CD14-positive monocyte (primary cell): ENCODE measurements at regions of chr20 and their contacts with region 1.

Region 1: DNA sequence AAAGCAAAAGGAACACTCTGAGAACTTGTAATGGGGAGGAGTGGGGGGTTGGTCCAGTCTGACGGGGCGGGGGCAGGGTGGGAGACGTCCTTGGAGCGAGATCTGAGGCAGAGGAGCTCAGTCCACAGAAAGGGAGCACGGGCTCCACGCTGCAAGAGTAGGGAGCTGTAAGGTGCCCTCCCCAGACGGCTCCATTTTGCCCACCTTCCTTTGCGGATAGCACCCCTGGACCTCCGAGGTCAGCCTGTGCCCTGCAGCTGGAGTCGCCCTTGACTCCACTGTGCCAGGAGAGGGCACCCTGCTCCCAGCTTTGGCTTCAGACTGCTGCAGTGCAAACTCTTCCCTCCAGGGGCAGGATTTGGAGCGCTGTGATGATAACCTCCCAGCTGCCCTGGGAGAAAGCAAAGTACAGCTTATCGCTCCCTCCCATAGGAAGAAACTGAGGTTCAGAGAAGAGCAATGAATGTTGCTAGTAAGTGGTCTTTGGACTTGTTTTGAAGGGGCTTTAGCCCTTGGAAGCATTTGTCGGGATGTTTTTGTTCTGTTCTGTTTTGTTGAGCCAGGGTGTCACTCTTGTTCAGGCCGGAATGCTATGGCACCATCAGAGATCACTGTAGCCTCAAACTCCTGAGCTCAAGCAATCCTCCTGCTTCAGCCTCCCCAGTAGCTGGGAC is 9.5 kb upstream of the AHCY start:
- DNase-seq: peak; percentile 78 to 85 (median 83)
- H3K4me3 ChIP-seq: no peak overlapping the region
- H3K4me3 Mint-ChIP-seq: peak overlapping the region in 1 of 2 donors; percentile 71
- H3K27ac ChIP-seq: no peak overlapping the region
- H3K27ac Mint-ChIP-seq: no peak overlapping the region
- H3K4me1 ChIP-seq: peaks cover 11 to 17% of the 10 kb centered on the region in 2 donors
- H3K4me1 Mint-ChIP-seq: peaks cover 22% of the 10 kb centered on the region
- H3K27me3 ChIP-seq: peaks cover 13 to 22% of the 10 kb centered on the region in 2 donors
- H3K27me3 Mint-ChIP-seq: peaks cover 21 to 27% (median 25%) of the 10 kb centered on the region in 3 donors
- CTCF ChIP-seq: peak; percentile 100

Region 2: GRCh38 chr20:34407962-34408474 is 95.3 kb after region 1 on chr20:
- intact Hi-C with region 1: loop called in 1 of 2 experiments (anchors 5 kb)
- DNase-seq: no peak
- H3K4me3 ChIP-seq: no peak overlapping the region
- H3K4me3 Mint-ChIP-seq: no peak overlapping the region
- H3K27ac ChIP-seq: no peak overlapping the region
- H3K27ac Mint-ChIP-seq: peak overlapping the region in 1 of 7 donors; percentile 16
- H3K4me1 ChIP-seq: peaks cover 9 to 12% of the 10 kb centered on the region in 2 donors
- H3K4me1 Mint-ChIP-seq: peaks cover 19% of the 10 kb centered on the region
- H3K27me3 ChIP-seq: no peaks in the 10 kb centered on the region
- H3K27me3 Mint-ChIP-seq: peaks cover 0 to 3% (median 0%) of the 10 kb centered on the region in 3 donors
- CTCF ChIP-seq: no peak

Region 3: DNA sequence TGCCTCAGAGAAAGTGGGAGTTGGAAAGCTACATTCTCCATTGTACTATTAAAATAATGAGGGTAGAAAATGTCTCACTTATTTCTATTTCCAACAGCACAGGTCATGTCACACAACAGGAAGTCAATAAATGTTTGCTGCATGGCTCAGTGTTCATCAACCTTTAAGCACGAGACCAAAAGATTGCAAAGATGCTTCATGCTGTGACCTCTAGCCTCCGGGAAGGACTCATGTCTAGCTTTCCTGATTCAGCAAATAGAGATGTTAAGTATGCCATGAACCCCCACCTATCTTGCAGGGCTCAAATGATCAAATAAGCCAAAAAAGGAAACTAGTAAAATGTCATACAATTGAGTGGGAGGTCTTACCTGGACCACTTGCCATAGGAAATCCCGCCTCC is 455.4 kb after region 1 on chr20:
- intact Hi-C with region 1: loop called (anchors 2 to 10 kb)
- DNase-seq: no peak
- H3K4me3 ChIP-seq: no peak overlapping the region
- H3K4me3 Mint-ChIP-seq: no peak overlapping the region
- H3K27ac ChIP-seq: no peak overlapping the region
- H3K27ac Mint-ChIP-seq: no peak overlapping the region
- H3K4me1 ChIP-seq: no peaks in the 10 kb centered on the region
- H3K4me1 Mint-ChIP-seq: no peaks in the 10 kb centered on the region
- H3K27me3 ChIP-seq: no peaks in the 10 kb centered on the region
- H3K27me3 Mint-ChIP-seq: peaks cover 0 to 2% (median 0%) of the 10 kb centered on the region in 3 donors
- CTCF ChIP-seq: no peak